Activated CD8-positive, alpha-beta T cell treated with anti-CD3 and anti-CD28 coated beads for 36 hours (primary cell): ENCODE measurements at regions of chr19 and their contacts with region 1.

Region 1: DNA sequence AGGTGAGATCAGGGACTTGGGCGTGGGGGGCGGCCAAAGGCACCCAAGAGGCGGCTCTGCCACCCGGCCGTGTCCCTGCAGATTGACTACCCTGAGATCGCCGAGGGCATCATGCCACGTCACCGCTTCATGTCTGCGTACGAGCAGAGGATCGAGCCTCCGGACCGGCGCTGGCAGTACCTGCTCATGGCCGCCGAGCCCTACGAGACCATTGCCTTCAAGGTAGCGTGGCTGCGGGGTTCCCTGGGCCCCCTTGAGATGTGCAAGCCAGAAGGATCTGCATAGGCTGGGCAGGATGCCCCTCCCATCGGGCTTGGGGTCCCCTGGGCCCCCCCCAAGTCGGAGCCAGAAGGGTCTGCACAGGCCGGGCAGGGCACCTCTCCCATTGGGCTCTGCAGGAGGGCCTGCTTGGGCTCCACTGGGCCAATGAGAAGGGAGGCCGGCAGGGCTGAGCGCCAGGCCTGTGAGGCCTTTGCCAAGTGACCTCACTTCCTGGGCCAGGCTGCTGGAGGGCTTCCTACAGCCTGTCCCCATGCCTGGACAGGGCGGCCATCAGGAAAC is 2.2 kb upstream of the AMH start:
- DNase-seq: no peak
- ATAC-seq: no peak
- H3K4me3 Mint-ChIP-seq: no peak overlapping the region
- H3K27ac Mint-ChIP-seq: no peak overlapping the region
- H3K4me1 Mint-ChIP-seq: peaks cover 9% of the 10 kb centered on the region
- H3K27me3 Mint-ChIP-seq: no peaks in the 10 kb centered on the region
- CTCF ChIP-seq: no peak

Region 2: DNA sequence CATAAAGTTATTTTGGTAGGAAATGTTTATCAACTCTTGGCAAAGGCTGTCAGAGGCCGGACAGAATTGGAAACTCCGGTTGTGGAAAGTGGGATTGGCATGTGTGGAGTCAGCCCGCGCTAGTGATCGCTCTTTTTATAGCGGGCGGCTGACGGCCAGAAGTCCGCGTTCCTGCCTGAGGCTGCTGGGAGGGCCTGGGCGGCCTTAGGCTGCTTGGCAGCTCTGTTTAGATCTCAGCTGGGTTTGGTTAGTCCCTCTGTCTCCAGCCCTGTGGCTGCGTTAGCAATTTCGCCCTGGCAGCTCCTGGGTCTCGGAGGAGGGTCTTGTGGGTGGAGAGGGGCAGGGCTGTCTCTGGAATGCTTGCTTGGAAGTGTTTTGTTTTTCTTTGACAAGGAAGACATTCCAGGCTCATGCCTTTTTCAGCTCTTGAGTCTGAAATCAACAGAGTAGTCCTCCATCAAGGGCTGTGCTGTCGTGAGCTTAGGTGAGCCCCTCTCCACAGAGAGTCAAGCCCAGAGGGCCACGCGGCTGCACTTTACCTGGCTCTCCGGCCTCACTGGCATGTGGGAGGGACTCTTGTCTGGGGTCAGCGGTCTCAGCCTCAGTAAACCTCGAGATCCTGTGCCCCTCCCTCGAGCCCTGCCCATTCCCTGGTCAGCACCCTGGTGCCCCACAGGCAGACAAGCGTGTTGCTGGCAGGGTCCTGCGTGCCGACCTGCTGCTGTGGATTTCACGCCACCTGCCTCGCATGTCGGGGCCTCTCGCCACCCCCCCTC is 60.6 kb before region 1 on chr19:
- CTCF ChIA-PET with region 1: no interaction called
- POLR2A ChIA-PET with region 1: no interaction called
- intact Hi-C with region 1: no loop called
- DNase-seq: no peak
- ATAC-seq: no peak
- H3K4me3 Mint-ChIP-seq: no peak overlapping the region
- H3K27ac Mint-ChIP-seq: no peak overlapping the region
- H3K4me1 Mint-ChIP-seq: peaks cover 7% of the 10 kb centered on the region
- H3K27me3 Mint-ChIP-seq: no peaks in the 10 kb centered on the region
- CTCF ChIP-seq: no peak

Region 3: GRCh38 chr19:2261438-2262172 is 14.7 kb after region 1 on chr19:
- CTCF ChIA-PET with region 1: interaction called, 21 read pairs
- POLR2A ChIA-PET with region 1: interaction called, 202 read pairs
- intact Hi-C with region 1: no loop called
- DNase-seq: peak; percentile 84
- ATAC-seq: peak; percentile 52
- H3K4me3 Mint-ChIP-seq: no peak overlapping the region
- H3K27ac Mint-ChIP-seq: no peak overlapping the region
- H3K4me1 Mint-ChIP-seq: peaks cover 28% of the 10 kb centered on the region
- H3K27me3 Mint-ChIP-seq: no peaks in the 10 kb centered on the region
- CTCF ChIP-seq: peak; percentile 92